ENCODE measurements at regions of chr5 and their contacts with region 1.

Region 1: GRCh38 chr5:132820162-132820754 is 7.2 kb downstream of the SOWAHA start:
- DNase-seq: peak; percentile 89 to 97
- ATAC-seq: peak; percentile 84

Region 2: GRCh38 chr5:132629230-132629944 is 190.9 kb before region 1 on chr5:
- intact Hi-C with region 1: no loop called
- DNase-seq: no peak
- ATAC-seq: no peak

Region 3: GRCh38 chr5:132883261-132883834 is 63.1 kb after region 1 on chr5:
- intact Hi-C with region 1: loop called in 1 of 2 experiments (anchors 10 kb)
- DNase-seq: peak; percentile 36 to 57
- ATAC-seq: peak; percentile 87

Region 4: GRCh38 chr5:133123297-133123696 is 303.0 kb after region 1 on chr5:
- intact Hi-C with region 1: no loop called
- DNase-seq: no peak
- ATAC-seq: no peak

Measured in left colon (tissue), 2 donors.